RWPE1 (cell line): ENCODE measurements at regions of chr7 and their contacts with region 1.

Region 1: GRCh38 chr7:98922393-98923187 is 44.3 kb downstream of the TRRAP start:
- DNase-seq: no peak
- H3K27ac ChIP-seq: peak overlapping the region; percentile 2; the same call in 1 of the 2 replicates
- CTCF ChIP-seq: no peak

Region 2: DNA sequence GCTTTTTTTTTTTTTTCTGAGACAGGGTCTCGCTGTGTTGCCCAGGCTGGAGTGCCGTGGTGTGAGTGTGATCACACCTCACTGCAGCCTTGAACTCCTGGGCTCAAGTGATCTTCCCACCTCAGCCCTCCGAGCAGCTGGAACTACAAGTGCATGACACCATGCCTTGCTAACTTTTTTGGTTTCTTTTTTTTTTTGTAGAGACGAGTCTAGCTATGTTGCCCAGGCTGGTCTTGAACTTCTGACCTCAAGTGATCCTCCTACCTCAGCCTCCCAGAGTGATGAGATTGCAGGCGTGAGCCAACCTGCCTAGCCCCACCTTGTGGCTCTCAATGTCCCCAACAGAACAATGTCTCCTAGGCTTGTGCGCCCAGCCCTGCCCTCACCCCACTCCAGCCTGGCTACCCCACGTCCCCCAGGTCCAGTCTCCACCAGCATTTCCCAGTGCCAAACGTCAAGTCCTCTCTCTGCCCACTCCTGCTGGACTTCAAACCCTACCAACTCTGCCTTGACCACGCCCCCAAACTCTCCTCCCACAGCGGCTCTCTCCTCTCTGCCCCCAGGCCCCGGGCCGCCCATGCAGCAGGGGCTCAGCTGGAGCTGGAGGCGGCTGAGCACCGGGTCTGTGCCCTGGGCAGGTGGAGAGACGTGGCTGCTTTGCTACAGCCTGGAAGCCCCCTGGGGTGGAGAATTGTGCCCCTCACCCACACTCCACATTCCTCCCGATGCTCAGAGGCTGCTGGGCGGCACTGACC is 692.4 kb before region 1 on chr7:
- CTCF ChIA-PET with region 1: no interaction called
- POLR2A ChIA-PET with region 1: interaction called, 11 read pairs
- DNase-seq: no peak
- H3K27ac ChIP-seq: no peak overlapping the region
- CTCF ChIP-seq: no peak

Region 3: DNA sequence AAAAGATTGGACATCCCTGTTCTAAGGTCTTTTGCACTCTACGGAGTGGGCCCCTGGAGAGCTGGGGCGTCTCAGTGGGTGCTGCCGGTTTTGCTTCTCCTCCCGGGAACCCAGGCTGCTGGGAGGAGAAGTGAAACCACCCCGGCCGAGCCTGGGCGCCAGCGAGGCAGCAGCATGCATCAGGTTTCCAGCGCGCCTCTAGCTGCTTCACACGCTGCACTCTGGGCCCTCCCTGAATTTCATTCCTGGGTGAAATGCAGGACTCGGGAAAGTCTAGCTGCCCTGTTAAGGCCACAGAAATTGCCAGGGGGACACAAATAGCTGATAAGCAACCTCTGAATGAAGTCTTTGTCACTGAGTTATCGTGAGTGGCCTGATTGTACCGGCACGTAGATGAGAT is 83.2 kb after region 1 on chr7:
- CTCF ChIA-PET with region 1: no interaction called
- POLR2A ChIA-PET with region 1: no interaction called
- DNase-seq: no peak
- H3K27ac ChIP-seq: no peak overlapping the region
- CTCF ChIP-seq: no peak